Activated T-helper 1 cell treated with anti-CD3 and anti-CD28 coated beads, Interleukin-12 subunit alpha, Interleukin-12 subunit beta, Interleukin-2, Interleukin-4 antibody, amounts not matched to agents 30 ng/mL and 10 ng/mL and 1 ng/mL, durations not matched to agents 14 hours and 24 hours and 36 hours (primary cell): ENCODE measurements at regions of chr16 and their contacts with region 1.

Region 1: GRCh38 chr16:14249291-14250032 is 178.3 kb downstream of the MRTFB start:
- DNase-seq: peak; percentile 19
- H3K4me3 Mint-ChIP-seq: no peak overlapping the region
- H3K27ac Mint-ChIP-seq: no peak overlapping the region
- H3K4me1 Mint-ChIP-seq: no peaks in the 10 kb centered on the region
- H3K27me3 Mint-ChIP-seq: no peaks in the 10 kb centered on the region

Region 2: DNA sequence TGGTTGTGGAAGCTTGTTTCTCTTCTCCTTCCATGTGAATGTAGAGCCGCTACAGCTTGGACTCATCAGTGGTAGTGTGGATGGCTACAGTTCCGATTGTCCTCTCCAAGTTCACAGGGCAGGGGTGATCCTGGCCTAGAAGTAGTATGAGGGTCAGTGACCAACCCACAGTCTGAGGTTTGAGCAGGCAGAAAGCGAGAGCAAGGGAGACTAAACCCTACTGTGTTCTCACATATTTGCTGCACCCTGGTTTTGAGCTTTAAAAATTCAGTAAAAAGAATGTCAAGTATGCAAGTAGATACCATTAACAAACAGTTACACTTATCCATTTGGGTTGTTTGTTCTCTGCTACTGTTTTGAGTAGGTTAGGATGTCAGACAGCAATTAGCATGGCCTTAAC is 29.5 kb before region 1 on chr16:
- intact Hi-C with region 1: no loop called
- DNase-seq: no peak
- H3K4me3 Mint-ChIP-seq: no peak overlapping the region
- H3K27ac Mint-ChIP-seq: no peak overlapping the region
- H3K4me1 Mint-ChIP-seq: no peaks in the 10 kb centered on the region
- H3K27me3 Mint-ChIP-seq: no peaks in the 10 kb centered on the region

Region 3: GRCh38 chr16:14337303-14338191 is 88.1 kb after region 1 on chr16:
- intact Hi-C with region 1: no loop called
- DNase-seq: no peak
- H3K4me3 Mint-ChIP-seq: no peak overlapping the region
- H3K27ac Mint-ChIP-seq: no peak overlapping the region
- H3K4me1 Mint-ChIP-seq: no peaks in the 10 kb centered on the region
- H3K27me3 Mint-ChIP-seq: peaks cover 8% of the 10 kb centered on the region

Region 4: DNA sequence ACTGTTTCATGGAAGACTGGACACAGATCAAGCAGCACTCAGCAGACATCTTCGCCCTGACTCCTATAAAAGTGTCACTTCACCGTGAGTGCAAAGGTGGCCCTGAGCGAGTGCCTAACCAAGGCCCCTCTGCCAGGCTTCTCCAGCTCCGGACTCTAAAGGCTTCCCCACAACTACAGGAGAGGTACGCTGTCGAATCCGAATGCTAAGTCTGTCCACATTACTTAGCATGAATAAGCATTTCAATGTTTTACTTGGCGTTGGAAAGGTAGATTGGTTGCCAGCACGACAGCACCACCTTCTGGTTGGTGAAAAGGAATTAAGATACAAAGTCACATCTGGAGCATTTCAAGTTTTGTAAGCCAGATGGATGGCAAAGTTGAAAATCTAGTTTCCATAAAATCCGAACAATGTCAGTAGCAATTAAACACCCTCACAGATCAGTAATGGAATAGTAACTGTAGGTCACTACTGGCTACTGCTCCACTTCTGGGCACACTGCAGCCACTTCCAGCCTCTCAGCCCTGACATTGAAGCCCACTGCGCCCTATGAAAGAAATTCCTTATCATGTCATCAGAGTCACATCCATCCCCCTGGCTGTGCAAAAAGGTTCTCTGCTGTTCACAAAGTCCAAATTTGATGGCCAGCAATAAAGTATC is 279.7 kb after region 1 on chr16:
- intact Hi-C with region 1: loop called (anchors 1 kb)
- DNase-seq: peak; percentile 24
- H3K4me3 Mint-ChIP-seq: no peak overlapping the region
- H3K27ac Mint-ChIP-seq: no peak overlapping the region
- H3K4me1 Mint-ChIP-seq: peaks cover 5% of the 10 kb centered on the region
- H3K27me3 Mint-ChIP-seq: no peaks in the 10 kb centered on the region

Region 5: DNA sequence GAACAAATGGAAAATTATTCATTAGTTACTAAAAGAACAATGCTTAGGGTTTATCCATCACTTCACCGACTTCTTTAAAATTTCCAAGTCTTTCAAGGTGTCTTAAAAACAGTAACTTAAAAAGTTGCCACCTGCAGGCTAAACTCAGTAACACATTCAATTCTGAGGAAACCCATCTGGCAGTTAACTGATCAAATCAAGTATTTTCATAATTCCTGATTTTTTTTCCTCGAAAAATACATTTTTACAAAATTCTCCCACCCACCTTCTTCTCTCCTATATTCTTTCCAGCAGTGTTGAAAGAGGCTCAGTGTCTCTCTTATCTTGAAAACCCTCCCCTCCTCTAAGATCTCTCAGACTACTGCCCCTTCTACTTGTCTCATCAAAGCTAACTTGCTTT is 350.7 kb after region 1 on chr16:
- intact Hi-C with region 1: loop called (anchors 1 kb)
- DNase-seq: no peak
- H3K4me3 Mint-ChIP-seq: no peak overlapping the region
- H3K27ac Mint-ChIP-seq: no peak overlapping the region
- H3K4me1 Mint-ChIP-seq: peaks cover 6% of the 10 kb centered on the region
- H3K27me3 Mint-ChIP-seq: no peaks in the 10 kb centered on the region